ENCODE measurements at regions of chr6 and their contacts with region 1.

Region 1: DNA sequence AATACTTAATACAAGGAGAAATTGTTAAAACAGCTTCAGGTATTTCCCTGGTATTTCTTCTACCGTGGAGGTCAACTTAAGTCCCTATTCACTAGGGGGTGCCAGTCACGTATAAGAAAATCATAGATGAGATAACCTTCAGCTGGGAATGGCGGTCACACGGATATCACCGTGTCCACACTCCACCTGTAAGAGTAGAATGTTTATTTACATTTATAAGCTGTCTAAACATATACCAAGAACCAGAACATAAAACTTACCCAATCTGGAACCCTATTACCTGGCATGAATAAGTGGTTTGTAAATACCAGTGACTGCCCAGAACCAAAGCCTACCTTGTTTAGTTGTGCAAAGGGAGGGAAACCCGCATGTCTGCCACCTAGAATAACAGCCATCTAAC is 1.9 kb upstream of the ELOVL4 start:
- DNase-seq: peak; percentile 49
- ATAC-seq: peak; percentile 31 to 65
- H3K4me3 ChIP-seq: no peak overlapping the region
- H3K27ac ChIP-seq: no peak overlapping the region
- H3K4me1 ChIP-seq: peaks cover 14% of the 10 kb centered on the region
- H3K27me3 ChIP-seq: peaks cover 43% of the 10 kb centered on the region
- CTCF ChIP-seq: peak; percentile 59

Region 2: DNA sequence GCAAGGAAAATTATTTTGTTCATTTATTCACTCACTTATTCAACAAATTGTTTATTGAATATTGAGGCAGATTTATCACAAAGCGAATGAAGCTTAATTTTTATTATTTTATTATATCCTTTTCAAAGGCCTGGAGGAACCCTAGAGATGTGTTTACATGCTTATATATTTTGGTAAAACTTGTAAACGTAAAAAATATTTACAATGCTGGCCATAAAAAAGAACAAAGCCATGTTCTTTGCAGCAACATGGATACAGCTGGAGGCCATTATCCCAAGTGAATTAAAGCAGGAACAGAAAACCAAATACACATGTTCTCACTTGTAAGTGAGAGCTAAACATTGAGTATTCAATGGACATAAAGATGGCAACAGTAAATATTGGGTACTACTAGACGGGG is 60.6 kb before region 1 on chr6:
- intact Hi-C with region 1: no loop called
- DNase-seq: no peak
- ATAC-seq: no peak
- H3K4me3 ChIP-seq: no peak overlapping the region
- H3K27ac ChIP-seq: no peak overlapping the region
- H3K4me1 ChIP-seq: no peaks in the 10 kb centered on the region
- H3K27me3 ChIP-seq: no peaks in the 10 kb centered on the region
- CTCF ChIP-seq: no peak

Region 3: DNA sequence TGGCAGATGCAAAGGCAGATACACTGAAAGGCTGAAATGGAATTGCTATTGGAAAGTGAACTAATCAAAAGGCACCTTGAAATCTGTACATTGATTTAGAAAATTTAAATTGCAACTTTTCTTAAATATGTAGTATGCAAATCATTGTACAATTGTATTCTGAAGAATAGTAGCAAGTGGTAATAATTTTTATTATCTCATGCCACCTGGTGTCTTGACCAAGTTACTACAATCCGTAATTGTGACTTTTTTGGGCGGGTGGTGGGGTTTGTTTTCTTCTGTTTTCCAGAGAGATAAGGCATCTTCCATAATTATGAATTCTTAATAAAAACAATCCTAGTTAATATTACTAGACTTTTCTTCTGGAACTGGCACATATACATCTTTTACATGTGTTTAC is 144.8 kb after region 1 on chr6:
- intact Hi-C with region 1: loop called (anchors 10 kb)
- DNase-seq: no peak
- ATAC-seq: no peak
- H3K4me3 ChIP-seq: no peak overlapping the region
- H3K27ac ChIP-seq: no peak overlapping the region
- H3K4me1 ChIP-seq: no peaks in the 10 kb centered on the region
- H3K27me3 ChIP-seq: no peaks in the 10 kb centered on the region
- CTCF ChIP-seq: peak; percentile 61

Region 4: DNA sequence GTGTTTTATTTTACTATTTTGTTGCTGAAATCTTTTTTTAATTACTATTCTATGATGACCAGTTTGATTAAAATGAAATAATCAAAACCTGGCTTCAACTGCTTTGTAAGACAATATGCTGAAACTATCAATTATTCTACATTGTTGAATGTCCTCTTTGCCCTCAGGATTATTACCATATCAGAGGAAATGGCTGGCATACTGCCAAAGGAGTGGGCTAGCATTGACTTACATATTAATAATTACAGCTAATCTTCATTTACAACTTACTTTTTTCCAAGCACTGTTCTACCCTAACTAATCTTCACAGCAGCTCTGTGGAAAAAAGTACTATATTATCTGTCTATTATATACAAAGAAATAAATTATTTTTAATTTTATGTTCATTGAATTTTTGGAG is 717.8 kb after region 1 on chr6:
- intact Hi-C with region 1: no loop called
- DNase-seq: no peak
- ATAC-seq: no peak
- H3K4me3 ChIP-seq: no peak overlapping the region
- H3K27ac ChIP-seq: no peak overlapping the region
- H3K4me1 ChIP-seq: no peaks in the 10 kb centered on the region
- H3K27me3 ChIP-seq: no peaks in the 10 kb centered on the region
- CTCF ChIP-seq: no peak

Measured in lower lobe of right lung (tissue), 2 donors.